ENCODE measurements at regions of chr1 and their contacts with region 1.

Region 1: DNA sequence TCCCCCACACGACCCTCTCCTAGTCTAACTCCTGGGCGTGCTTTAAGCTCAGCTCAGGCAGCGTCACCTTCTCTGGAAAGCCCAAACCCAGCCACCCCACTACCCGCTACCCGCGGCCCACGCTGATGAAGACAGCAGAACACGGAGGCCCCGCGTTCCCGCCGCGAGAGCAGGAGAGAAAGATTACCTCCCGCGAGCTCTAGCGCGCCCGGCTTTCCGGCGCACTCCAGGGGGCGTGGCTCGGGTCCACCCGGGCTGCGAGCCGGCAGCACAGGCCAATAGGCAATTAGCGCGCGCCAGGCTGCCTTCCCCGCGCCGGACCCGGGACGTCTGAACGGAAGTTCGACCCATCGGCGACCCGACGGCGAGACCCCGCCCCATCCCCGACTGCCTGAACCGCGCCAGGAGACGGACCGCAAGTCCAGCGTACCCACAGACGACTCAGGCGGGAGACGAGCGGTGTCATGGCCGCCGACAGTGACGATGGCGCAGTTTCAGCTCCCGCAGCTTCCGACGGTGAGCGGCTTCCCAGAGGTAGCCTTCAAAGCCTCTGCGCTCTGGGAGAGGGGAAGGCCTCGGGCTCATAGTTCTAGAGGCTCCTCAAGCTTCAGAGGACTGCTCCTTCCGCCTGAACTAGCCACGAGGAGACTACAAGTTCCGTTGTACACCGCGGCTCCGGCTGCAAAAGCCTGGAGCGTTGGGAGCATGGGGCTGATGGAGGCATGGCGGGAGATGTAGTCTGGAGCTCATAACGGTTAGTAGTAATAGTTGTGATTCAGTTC is at the starts of genes MUTYH and TOE1:
- DNase-seq: peak; percentile 85
- ATAC-seq: peak; percentile 86
- H3K4me3 Mint-ChIP-seq: peak within 1 kb of the TSS; percentile 100
- H3K27ac Mint-ChIP-seq: peak within 1 kb of the TSS; percentile 99
- H3K4me1 Mint-ChIP-seq: peaks cover 39% of the 10 kb centered on the region
- H3K27me3 Mint-ChIP-seq: no peaks in the 10 kb centered on the region
- CTCF ChIP-seq: no peak
- total RNA-seq, gene MUTYH: 61.0 and 63.0 TPM in 2 replicates
- total RNA-seq, gene TOE1: 24.6 and 25.3 TPM in 2 replicates

Region 2: DNA sequence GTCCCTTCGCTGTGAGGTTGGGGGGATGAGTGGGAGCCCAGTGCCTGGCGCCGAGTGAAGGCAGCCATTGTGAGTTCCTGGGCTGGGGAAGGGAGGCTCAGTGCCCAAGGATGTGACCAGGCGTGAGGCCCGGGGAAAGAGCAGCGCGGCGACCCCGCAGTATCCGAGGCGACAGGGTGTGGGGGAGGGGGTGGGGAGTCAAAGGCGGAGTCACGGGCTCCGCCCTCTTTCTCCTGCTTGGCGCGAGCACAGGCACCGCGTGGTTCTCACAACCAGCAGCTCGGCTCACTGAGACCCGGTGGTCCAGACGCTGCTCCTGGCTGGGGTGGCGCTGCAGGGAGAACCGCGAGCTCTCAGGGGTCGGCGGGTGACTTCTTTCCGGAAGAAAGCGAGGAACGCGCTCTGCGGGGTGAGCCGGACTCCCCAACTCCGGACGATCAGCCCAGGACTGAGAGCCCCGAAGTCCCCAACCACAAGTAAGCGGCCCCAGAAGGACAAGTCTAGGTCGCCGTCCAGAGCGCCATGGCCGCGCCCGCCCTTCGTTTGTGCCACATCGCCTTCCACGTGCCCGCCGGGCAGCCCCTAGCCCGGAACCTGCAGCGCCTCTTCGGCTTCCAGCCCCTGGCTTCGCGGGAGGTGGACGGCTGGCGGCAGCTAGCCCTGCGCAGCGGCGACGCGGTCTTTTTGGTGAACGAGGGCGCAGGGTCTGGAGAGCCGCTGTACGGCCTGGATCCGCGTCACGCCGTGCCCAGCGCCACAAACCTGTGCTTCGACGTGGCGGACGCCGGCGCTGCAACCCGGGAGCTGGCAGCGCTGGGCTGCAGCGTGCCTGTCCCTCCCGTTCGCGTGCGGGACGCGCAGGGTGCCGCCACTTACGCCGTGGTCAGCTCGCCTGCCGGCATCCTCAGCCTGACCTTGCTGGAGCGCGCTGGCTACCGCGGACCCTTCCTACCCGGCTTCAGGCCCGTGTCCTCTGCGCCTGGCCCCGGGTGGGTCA is 13.1 kb before region 1 on chr1 and contains the start of gene HPDL:
- CTCF ChIA-PET with region 1: interaction called, 3 read pairs
- POLR2A ChIA-PET with region 1: interaction called, 45 read pairs
- intact Hi-C with region 1: loop called (anchors 1 kb)
- DNase-seq: peak; percentile 49
- ATAC-seq: peak; percentile 93
- H3K4me3 Mint-ChIP-seq: peak within 1 kb of the TSS; percentile 83
- H3K27ac Mint-ChIP-seq: peak within 1 kb of the TSS; percentile 53
- H3K4me1 Mint-ChIP-seq: peaks cover 18% of the 10 kb centered on the region
- H3K27me3 Mint-ChIP-seq: no peaks in the 10 kb centered on the region
- CTCF ChIP-seq: no peak
- total RNA-seq, gene HPDL: 3.7 and 4.3 TPM in 2 replicates